Calu3 (cell line): ENCODE measurements at regions of chr18 and their contacts with region 1.

Region 1: DNA sequence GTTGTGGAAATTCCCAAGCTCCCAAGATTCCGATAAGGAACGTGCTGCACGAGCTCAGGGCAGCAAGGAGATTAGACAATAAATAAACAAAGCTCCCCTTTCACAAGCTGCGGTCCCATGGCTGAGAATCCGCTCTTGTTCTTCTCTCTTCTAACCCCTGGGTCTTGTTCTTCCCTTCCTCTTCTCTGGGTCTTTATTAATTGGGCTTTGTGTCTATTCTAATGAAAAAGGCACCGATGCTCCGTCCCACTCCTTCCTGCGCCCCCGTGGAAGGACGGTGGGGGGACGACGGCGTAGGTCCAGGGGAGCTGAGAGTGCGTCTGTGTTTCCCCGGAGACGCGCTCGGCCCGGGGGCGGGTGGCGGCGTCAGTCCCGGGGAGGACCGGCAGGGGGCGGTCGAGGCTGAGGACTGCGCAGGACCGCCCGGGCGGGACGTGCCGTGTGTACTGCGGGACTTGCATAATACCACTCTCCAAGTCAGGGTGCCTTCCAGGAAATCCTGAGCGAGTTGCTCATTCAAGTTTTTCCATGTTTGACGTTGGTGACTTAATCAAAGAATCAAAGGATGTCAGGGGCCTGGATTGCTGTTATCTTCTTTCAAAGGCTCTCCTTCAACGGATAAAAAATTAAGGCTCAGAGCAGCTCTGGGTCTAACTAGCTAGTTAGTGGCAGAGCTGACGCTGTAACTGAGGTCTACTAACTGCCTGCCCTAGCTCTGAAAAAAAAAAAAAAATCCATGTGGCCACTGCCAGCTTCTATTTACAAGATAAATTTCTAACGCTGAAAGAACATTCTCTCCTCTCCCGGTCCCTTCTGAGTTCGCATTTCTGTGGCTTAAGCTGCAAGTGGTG is 321.4 kb downstream of the TGIF1 start:
- DNase-seq: peak; percentile 96
- H3K4me3 Mint-ChIP-seq: peak overlapping the region; percentile 74
- H3K27ac Mint-ChIP-seq: peak overlapping the region; percentile 55
- H3K4me1 Mint-ChIP-seq: peaks cover 39% of the 10 kb centered on the region
- H3K27me3 Mint-ChIP-seq: no peaks in the 10 kb centered on the region
- CTCF ChIP-seq: peak; percentile 97

Region 2: GRCh38 chr18:3703732-3704176 is 67.6 kb before region 1 on chr18:
- CTCF ChIA-PET with region 1: interaction called, 17 read pairs
- intact Hi-C with region 1: loop called (anchors 2 kb)
- DNase-seq: peak; percentile 74
- H3K4me3 Mint-ChIP-seq: no peak overlapping the region
- H3K27ac Mint-ChIP-seq: no peak overlapping the region
- H3K4me1 Mint-ChIP-seq: peaks cover 35% of the 10 kb centered on the region
- H3K27me3 Mint-ChIP-seq: no peaks in the 10 kb centered on the region
- CTCF ChIP-seq: peak; percentile 72

Region 3: GRCh38 chr18:3722320-3723000 is 48.9 kb before region 1 on chr18:
- CTCF ChIA-PET with region 1: interaction called, 4 read pairs
- intact Hi-C with region 1: loop called (anchors 5 kb)
- DNase-seq: no peak
- H3K4me3 Mint-ChIP-seq: peak overlapping the region; percentile 44
- H3K27ac Mint-ChIP-seq: peak overlapping the region; percentile 64
- H3K4me1 Mint-ChIP-seq: peaks cover 48% of the 10 kb centered on the region
- H3K27me3 Mint-ChIP-seq: no peaks in the 10 kb centered on the region
- CTCF ChIP-seq: no peak

Region 4: DNA sequence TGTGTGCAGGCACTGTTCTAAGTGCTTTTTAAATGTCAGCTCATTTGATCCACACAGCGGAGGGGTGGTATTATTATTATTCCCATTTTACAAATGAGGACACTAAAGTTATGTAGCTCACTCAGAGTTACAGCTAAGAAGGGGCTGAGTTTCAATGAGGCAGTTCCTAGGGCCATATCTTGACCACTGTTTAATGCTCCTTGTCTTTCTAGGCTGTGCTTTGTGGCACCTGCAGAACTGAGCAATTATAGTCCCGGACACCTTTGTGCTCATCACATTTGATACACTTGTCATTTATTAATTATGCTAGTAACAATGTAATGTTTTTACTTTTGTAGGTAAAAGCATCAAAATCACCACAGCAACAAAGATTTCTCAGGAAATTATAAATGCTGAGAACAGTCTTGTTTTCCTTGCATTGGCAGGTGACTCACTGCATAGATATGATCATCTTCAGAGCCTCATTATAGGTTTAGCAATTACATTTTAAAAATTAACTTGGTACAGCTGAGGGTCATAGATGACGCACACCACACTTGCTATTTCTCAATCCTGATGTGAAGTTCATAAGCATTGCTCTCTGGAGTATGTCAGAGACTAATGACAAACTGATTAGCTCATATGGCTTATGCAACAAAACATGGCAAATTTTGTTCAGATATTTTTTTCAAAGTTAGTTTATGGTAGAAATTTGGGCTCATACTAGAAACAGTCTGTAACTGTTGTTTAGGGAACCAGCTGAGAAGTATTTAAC is 45.4 kb after region 1 on chr18:
- CTCF ChIA-PET with region 1: interaction called, 4 read pairs
- intact Hi-C with region 1: loop called (anchors 5 kb)
- DNase-seq: peak; percentile 28
- H3K4me3 Mint-ChIP-seq: no peak overlapping the region
- H3K27ac Mint-ChIP-seq: peak overlapping the region; percentile 81
- H3K4me1 Mint-ChIP-seq: peaks cover 50% of the 10 kb centered on the region
- H3K27me3 Mint-ChIP-seq: no peaks in the 10 kb centered on the region
- CTCF ChIP-seq: no peak

Region 5: GRCh38 chr18:3832025-3832638 is 60.8 kb after region 1 on chr18:
- CTCF ChIA-PET with region 1: no interaction called
- intact Hi-C with region 1: no loop called
- DNase-seq: no peak
- H3K4me3 Mint-ChIP-seq: no peak overlapping the region
- H3K27ac Mint-ChIP-seq: no peak overlapping the region
- H3K4me1 Mint-ChIP-seq: no peaks in the 10 kb centered on the region
- H3K27me3 Mint-ChIP-seq: no peaks in the 10 kb centered on the region
- CTCF ChIP-seq: no peak

Region 6: DNA sequence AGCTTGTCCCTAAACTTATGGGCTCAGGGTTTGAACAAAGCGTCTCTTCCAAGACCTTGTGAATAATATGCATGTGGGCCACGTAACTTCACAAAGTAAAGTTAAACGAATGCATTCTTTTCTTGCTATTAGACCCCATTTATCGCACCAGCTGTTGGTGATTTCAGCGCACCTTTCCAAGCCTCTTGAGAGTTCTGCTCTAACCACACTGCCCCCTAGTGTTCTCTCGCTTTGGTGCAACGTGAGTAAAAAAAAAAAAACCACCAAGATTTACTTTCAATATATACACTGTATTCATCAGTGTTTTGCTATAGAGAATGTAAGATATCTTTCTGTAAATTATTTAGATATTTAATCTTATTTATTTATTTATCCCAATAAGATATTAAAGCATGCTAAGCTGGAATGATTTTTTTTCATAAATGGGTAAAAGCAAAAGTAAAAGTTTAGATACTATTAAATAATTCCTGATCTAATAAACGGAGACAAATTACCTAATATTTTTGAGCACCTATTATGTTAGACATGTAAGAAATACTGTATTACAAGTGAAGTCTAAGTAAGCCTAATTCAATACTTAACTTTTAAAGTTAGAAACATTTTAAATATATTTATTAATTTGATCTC is 224.2 kb after region 1 on chr18:
- CTCF ChIA-PET with region 1: interaction called, 17 read pairs
- intact Hi-C with region 1: loop called (anchors 1 kb)
- DNase-seq: peak; percentile 64
- H3K4me3 Mint-ChIP-seq: no peak overlapping the region
- H3K27ac Mint-ChIP-seq: no peak overlapping the region
- H3K4me1 Mint-ChIP-seq: no peaks in the 10 kb centered on the region
- H3K27me3 Mint-ChIP-seq: no peaks in the 10 kb centered on the region
- CTCF ChIP-seq: peak; percentile 86